ENCODE measurements at regions of chr6 and their contacts with region 1.

Region 1: GRCh38 chr6:150016324-150017185 is 8.8 kb downstream of the RAET1L start:
- DNase-seq: peak; percentile 42 to 60
- H3K4me3 ChIP-seq: no peak overlapping the region
- H3K27ac ChIP-seq: no peak overlapping the region
- H3K4me1 ChIP-seq: no peaks in the 10 kb centered on the region
- H3K27me3 ChIP-seq: no peaks in the 10 kb centered on the region
- CTCF ChIP-seq: peak; percentile 75

Region 2: GRCh38 chr6:149834513-149835481 is 181.8 kb before region 1 on chr6:
- CTCF ChIA-PET with region 1: interaction called, 4 read pairs
- POLR2A ChIA-PET with region 1: no interaction called
- intact Hi-C with region 1: loop called (anchors 2 kb)
- DNase-seq: peak; percentile 48 to 79
- H3K4me3 ChIP-seq: no peak overlapping the region
- H3K27ac ChIP-seq: peak overlapping the region; percentile 45
- H3K4me1 ChIP-seq: no peaks in the 10 kb centered on the region
- H3K27me3 ChIP-seq: no peaks in the 10 kb centered on the region
- CTCF ChIP-seq: peak; percentile 96

Region 3: DNA sequence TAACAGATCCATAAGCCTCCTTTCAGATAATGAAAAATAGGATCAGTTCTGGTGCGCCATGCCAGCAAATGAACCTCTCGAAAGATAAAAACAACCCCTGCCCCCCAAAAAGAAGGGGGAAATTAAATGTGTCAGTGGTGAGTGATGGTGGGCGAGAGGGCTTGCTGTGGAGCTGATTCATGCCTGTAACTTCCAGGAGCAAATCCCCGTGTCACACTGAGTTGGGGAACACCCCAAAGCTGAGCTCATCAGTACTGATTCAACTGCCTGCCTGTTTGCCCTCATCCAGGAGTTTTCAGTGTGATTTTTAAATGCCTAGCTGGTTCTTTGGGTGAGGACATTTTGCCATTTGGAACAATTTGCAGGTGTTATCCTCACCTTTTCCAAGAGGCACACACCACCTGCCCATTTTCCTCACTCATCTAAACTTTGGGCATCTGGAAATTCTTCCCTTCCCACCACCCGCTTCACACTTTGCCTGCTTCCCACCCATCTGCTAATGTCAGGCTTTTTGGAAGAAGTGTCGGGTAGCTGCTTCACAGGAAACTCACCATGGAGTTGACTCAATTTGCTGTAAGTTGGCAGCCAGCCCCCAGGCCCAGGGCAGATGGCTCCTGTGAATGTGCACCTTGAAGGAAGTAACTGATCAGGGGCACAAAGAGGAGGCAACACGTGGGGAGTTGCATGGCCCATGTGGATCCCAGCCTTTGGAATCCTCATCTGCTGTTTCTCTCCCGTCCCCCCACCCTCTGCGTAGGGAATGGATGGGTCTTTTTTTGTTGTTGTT is 213.4 kb after region 1 on chr6:
- CTCF ChIA-PET with region 1: no interaction called
- POLR2A ChIA-PET with region 1: no interaction called
- intact Hi-C with region 1: no loop called
- DNase-seq: no peak
- H3K4me3 ChIP-seq: no peak overlapping the region
- H3K27ac ChIP-seq: no peak overlapping the region
- H3K4me1 ChIP-seq: no peaks in the 10 kb centered on the region
- H3K27me3 ChIP-seq: no peaks in the 10 kb centered on the region
- CTCF ChIP-seq: no peak

Region 4: GRCh38 chr6:150395398-150396009 is 378.9 kb after region 1 on chr6:
- CTCF ChIA-PET with region 1: no interaction called
- POLR2A ChIA-PET with region 1: no interaction called
- intact Hi-C with region 1: loop called (anchors 5 kb)
- DNase-seq: peak in 1 of 2 experiments; percentile 60
- H3K4me3 ChIP-seq: no peak overlapping the region
- H3K27ac ChIP-seq: no peak overlapping the region
- H3K4me1 ChIP-seq: peaks cover 12% of the 10 kb centered on the region
- H3K27me3 ChIP-seq: no peaks in the 10 kb centered on the region
- CTCF ChIP-seq: peak; percentile 82

Measured in PC-9 (cell line).